Ascending aorta (tissue), 2 donors: ENCODE measurements at regions of chr15 and their contacts with region 1.

Region 1: DNA sequence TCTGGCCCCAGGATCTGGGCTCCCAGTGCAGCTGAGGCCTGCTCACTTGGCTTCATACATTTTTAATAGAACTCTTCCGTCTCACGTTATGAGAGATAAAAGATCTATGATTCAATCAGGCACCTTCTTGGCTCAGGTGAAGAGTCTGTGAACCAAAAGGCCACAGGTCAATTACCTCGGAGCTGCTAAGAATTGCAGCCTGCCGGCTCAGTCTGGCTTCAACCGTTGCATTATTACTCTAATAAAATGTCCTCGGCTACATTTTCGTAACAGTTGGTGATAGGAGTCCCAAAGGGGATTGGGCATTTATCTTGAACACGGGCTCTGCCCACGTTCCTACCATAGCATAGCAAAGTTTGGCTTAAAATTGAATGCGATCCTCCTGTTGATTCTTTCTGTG is 176.3 kb downstream of the SLCO3A1 start:
- DNase-seq: no peak
- H3K4me3 ChIP-seq: peak overlapping the region in 1 of 2 donors; percentile 40
- H3K27ac ChIP-seq: peak overlapping the region; percentile 87 to 88
- H3K4me1 ChIP-seq: peaks cover 8 to 41% of the 10 kb centered on the region in 2 donors
- H3K27me3 ChIP-seq: no peaks in the 10 kb centered on the region
- CTCF ChIP-seq: no peak

Region 2: DNA sequence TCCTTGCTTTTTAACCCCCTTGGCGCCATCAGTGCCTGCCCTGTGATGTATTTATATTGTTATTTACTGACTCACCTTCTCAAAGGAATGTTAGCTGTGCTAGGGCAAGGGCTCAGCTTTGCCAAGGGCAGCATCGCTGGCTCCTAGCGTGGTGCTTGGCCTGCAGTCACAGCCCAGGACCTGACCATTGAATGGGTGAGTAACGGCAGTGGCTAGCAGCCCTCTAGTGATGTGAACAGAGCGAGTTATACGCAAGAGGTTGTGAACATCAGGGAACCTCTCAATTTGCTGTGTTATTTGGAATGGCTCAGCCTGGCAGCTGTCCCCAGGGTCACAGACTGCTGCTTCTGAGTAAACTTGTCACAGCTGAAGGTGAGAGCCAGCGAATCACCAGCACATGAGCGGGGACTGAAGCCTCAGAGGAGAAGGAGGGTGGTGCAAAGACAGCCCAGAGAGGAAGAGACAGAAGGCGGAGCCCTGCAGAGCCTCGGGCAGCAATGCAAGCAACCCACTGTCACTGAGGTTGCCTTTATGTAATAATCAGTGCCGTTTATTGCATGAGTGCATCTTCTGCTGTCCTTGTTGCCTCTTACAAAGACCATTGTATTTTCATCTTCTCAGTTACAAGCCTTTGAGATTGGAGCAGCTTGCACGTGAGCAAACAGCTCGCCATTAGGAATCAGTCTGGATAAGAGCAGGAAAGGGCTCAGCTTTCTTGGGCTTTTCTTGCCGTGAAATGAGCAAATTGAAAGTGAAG is 18.0 kb before region 1 on chr15:
- intact Hi-C with region 1: loop called (anchors 2 kb)
- DNase-seq: peak in 1 of 2 donors; percentile 72
- H3K4me3 ChIP-seq: peak overlapping the region; percentile 18 to 49
- H3K27ac ChIP-seq: peak overlapping the region; percentile 74 to 76
- H3K4me1 ChIP-seq: peaks cover 4 to 43% of the 10 kb centered on the region in 2 donors
- H3K27me3 ChIP-seq: no peaks in the 10 kb centered on the region
- CTCF ChIP-seq: no peak

Region 3: DNA sequence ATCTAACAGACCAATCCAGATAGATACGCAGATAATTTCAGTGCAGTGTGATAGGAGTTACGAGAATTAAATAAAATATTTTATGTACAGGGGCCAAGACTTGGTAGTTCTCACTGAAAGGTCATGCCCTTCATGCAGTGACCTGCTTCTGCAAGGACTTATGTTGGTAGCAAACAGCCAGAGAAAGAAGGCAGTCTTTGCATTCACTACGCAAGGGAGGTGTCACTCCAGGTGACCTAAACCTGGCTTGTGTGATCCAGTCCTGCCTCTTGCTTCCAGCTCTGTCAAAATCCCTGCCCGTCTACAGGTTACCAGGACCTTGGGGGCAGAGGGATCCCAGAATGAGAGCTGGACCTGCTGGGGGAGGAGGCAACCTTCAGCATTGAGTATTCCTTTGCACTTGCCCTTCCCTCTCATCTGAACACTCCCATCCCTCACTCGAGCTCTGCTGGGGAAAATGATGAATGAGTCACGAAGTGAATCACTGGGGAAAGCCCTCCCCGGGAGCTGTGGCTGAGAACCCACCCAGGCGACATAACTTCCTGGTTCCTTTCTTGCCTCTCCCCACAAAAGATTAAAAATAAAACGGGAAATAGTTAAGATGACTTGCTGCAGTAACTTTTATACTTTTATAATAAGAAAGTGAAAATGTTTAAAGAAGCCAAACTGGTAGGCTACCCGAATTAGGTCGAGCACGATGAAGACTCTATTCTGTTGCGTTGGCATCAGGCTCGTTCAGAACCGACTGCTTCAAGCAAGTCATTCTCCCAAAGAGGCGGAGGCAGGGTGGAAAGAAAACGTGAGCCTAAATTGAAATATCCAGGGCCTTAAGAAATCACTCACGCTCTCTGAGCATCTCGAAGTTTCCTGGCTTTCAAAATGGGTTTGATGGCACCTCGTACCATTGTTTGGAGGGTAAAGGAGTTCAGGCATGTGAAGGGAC is 39.8 kb after region 1 on chr15:
- intact Hi-C with region 1: loop called (anchors 2 kb)
- DNase-seq: peak; percentile 28 to 88
- H3K4me3 ChIP-seq: peak overlapping the region; percentile 34 to 55
- H3K27ac ChIP-seq: peak overlapping the region; percentile 70 to 80
- H3K4me1 ChIP-seq: peaks cover 0 to 18% of the 10 kb centered on the region in 2 donors
- H3K27me3 ChIP-seq: no peaks in the 10 kb centered on the region
- CTCF ChIP-seq: no peak